Heart left ventricle (tissue), 16 donors: ENCODE measurements at regions of chr2 and their contacts with region 1.

Region 1: GRCh38 chr2:133579274-133579673 is 11.0 kb upstream of the NCKAP5 start:
- DNase-seq: peak; percentile 46 to 72 (median 66)
- ATAC-seq: peak; percentile 63 to 94 (median 90)
- H3K4me3 ChIP-seq: no peak overlapping the region
- H3K27ac ChIP-seq: peak overlapping the region in 7 of 12 donors; percentile 7 to 72 (median 49)
- H3K4me1 ChIP-seq: peaks cover 0 to 27% (median 13%) of the 10 kb centered on the region in 12 donors
- H3K27me3 ChIP-seq: no peaks in the 10 kb centered on the region
- CTCF ChIP-seq: no peak
- POLR2A ChIP-seq: no peak

Region 2: DNA sequence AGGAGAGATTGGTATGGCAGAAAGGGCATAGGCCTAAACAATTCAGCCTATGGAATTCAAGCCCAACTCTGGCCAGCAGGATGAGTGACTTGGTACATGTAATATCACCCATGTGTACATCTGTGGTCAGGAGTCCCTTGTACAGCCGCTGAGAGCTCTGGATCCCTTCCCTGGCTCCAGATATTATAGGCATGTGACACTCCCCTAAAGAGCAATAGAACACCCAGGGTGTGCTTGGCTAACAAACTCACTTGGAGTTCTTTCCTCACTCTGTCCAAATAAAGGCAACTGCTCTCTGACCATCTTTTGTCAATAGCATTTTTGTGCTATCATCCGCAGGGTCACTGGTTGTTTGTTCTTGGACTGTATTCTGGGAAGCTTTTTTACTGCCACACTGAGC is 186.4 kb after region 1 on chr2:
- intact Hi-C with region 1: loop called in 1 of 10 experiments (anchors 5 kb)
- DNase-seq: peak in 4 of 5 donors; percentile 39 to 58 (median 46)
- ATAC-seq: peak; percentile 84 to 97 (median 96)
- H3K4me3 ChIP-seq: no peak overlapping the region
- H3K27ac ChIP-seq: peak overlapping the region in 11 of 12 donors; percentile 20 to 80 (median 68)
- H3K4me1 ChIP-seq: peaks cover 0 to 31% (median 11%) of the 10 kb centered on the region in 12 donors
- H3K27me3 ChIP-seq: no peaks in the 10 kb centered on the region
- CTCF ChIP-seq: no peak
- POLR2A ChIP-seq: no peak

Region 3: GRCh38 chr2:133777607-133778006 is 198.3 kb after region 1 on chr2:
- intact Hi-C with region 1: no loop called
- DNase-seq: peak in 1 of 5 donors; percentile 52
- ATAC-seq: peak; percentile 64 to 81 (median 76)
- H3K4me3 ChIP-seq: no peak overlapping the region
- H3K27ac ChIP-seq: no peak overlapping the region
- H3K4me1 ChIP-seq: peaks cover 0 to 30% (median 15%) of the 10 kb centered on the region in 12 donors
- H3K27me3 ChIP-seq: no peaks in the 10 kb centered on the region
- CTCF ChIP-seq: no peak
- POLR2A ChIP-seq: no peak

Region 4: DNA sequence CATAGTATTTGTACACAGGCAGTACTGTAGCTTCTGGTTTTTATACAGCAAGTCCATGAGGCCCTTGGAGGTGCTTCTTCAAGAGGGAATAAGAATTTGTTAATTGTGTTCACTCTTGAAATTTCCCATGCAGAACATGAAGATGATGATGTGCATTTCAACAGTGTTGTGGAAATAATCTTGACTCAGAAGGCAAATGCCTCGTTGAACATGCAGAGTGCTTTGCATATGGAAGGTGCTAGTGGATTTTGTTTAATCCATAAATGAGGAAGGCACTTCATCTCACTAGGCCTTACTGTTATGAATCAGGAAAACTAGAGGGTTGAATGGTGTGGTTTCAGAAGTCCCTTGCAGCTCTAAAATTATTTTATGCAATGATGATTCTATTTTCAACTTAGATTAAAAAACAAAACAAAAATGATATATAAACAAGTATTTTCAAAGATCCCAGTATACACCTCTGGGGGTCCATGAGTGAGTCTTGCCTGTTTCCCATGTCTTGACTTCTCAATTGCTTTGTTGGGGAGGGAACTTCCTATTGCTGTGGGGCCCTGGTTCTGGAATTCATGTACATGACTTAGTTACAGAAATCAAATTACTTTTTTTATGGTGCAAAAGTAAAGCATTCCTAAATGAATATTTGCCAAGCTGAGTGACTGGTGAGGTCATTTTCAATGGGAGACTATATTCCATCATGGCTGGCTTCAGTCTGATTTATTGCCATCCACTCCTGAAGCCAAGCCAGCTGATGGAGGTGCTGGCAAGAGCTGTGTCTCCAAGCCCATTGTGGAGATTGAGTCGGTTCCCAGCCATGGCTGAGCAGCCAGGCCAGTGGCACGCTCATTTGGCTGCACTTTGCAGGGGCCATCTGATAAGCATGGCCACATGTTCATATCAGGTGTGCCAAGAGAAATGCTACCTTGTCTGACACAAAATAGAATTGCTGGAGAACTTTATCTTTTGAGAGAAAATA is 731.1 kb after region 1 on chr2:
- intact Hi-C with region 1: no loop called
- DNase-seq: peak in 1 of 5 donors; percentile 38
- ATAC-seq: no peak
- H3K4me3 ChIP-seq: no peak overlapping the region
- H3K27ac ChIP-seq: peak overlapping the region in 1 of 12 donors; percentile 7
- H3K4me1 ChIP-seq: peaks cover 0 to 72% (median 50%) of the 10 kb centered on the region in 12 donors
- H3K27me3 ChIP-seq: no peaks in the 10 kb centered on the region
- CTCF ChIP-seq: no peak
- POLR2A ChIP-seq: no peak